OCI-LY7 (cell line): ENCODE measurements at regions of chr1 and their contacts with region 1.

Region 1: GRCh38 chr1:28642847-28643635 is at the start of gene TAF12:
- DNase-seq: peak; percentile 98
- H3K4me3 ChIP-seq: peak within 1 kb of the TSS; percentile 86
- H3K27ac ChIP-seq: peak within 1 kb of the TSS; percentile 95
- H3K4me1 ChIP-seq: peaks cover 39% of the 10 kb centered on the region
- CTCF ChIP-seq: peak; percentile 72
- total RNA-seq, gene TAF12: 30.1 and 31.0 TPM in 2 replicates

Region 2: DNA sequence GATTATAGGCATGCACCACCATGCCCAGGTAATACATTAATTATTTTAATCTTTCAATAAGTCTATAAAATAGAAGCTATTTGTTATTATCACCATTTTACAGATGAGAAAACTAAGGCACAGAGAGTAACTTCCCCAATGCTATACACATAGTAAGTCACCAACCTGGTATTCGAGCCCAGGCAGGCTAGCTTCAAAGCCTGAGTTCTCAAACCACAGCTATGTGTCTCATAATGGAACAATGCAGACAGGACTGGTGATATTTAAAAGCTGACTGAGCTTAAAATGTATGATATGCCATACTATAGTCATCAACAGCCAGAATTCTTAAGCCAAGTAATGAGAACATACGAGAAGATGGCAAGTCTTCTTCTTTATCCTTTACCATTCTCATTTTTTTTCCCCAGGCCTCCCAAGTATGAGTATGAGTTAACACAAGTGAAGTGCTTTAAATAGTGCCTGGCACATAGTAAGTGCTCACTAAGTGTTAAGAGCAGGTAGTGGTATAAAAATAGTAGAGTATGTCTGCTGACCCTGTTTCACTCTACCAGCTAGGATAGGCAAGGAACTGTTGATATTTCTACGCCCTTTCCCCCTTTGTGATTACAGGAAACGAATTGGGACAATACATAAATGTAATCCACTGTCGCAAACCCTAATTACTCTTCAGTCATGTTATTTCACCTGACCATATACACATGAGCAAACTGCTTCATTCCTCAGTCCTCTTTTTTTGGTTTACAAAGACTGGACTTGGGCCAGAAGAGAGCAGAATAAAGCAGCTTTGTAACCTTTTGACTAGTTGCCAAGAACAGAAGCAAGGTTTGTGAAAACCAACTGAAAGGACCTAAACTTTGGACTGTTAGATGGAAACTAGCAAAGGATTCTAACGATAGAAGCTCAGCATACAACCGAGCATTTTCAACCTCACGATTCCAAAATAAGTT is 564.1 kb before region 1 on chr1:
- CTCF ChIA-PET with region 1: no interaction called
- POLR2A ChIA-PET with region 1: no interaction called
- intact Hi-C with region 1: loop called (anchors 10 kb)
- DNase-seq: no peak
- H3K4me3 ChIP-seq: no peak overlapping the region
- H3K27ac ChIP-seq: peak overlapping the region; percentile 84
- H3K4me1 ChIP-seq: peaks cover 92% of the 10 kb centered on the region
- CTCF ChIP-seq: no peak

Region 3: DNA sequence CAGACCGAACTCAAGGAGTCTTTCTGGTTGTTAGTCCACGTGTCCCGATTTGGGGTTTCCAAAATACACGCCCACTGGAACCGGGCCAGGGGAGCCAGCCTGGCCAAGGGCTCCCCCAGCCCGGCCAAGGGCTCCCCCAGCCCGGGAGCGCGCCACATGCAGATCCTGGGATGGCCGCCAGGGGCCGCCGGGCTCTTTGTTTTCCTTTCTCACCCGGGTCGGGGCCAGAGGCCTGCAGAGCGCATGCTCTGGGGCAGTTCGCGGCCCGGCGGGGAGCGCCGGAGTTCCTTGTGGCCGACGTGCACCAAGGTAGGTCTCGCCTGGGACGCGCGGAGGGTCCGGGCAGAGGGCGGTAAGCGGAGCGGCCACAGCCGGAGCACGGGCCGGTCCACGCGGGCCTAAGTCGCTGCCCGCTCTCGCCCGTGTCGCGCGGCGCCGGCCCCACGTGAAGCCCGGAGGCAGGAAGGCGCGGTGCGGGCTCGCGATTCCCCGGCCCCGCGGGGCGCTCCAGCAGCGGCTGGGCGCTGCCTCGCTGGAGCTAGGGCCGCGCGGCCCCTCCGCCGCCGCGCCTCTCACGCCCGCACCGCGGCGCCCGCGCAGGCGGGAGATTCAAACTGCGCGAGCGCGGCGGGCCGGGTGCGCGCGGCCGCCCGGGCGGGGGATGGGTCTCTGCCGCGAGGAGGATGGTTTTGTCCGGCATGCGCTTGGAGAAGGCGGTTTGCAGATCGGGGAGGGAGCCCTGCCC is 124.9 kb before region 1 on chr1:
- CTCF ChIA-PET with region 1: no interaction called
- POLR2A ChIA-PET with region 1: interaction called, 5 read pairs
- intact Hi-C with region 1: loop called (anchors 1 kb)
- DNase-seq: peak; percentile 94
- H3K4me3 ChIP-seq: peak overlapping the region; percentile 78
- H3K27ac ChIP-seq: peak overlapping the region; percentile 75
- H3K4me1 ChIP-seq: peaks cover 51% of the 10 kb centered on the region
- CTCF ChIP-seq: peak; percentile 93

Region 4: DNA sequence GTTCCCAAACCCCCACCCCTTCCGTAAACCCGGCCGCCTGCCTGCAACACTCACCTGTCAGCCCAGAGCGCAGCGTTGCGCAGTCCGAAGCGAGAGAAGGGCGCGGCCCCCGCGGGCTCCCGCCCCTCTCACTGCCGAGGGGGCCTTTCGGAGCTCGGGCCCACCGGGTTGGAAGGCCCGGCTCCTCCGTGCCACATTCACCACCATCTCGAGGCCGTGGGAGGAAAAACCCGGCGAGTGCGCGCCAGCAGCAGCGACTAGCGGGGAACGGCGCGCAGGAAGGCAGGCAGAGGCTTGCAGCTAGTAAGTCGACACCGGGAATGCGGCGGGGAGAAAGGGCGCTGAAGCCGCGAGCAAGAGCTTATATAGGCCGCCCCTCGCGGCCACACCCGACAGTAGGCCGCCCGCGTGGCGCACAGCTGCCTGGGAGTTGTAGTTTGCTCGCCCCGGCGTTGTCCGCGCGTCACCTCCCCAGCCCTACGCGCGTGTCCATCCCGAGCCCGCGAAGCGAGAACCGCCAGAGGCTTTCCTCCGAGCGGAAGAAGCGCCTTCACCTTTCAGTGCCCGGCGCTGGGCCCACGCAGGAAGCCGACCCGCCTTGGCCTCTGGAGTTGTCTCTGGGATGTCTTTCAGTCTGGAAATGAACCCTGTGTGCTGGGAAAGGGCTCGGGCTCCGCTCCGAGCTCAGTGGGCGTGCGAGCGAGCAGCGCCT is 61.3 kb before region 1 on chr1:
- CTCF ChIA-PET with region 1: no interaction called
- POLR2A ChIA-PET with region 1: interaction called, 15 read pairs
- intact Hi-C with region 1: loop called (anchors 2 kb)
- DNase-seq: peak; percentile 96
- H3K4me3 ChIP-seq: peak overlapping the region; percentile 97
- H3K27ac ChIP-seq: peak overlapping the region; percentile 85
- H3K4me1 ChIP-seq: peaks cover 38% of the 10 kb centered on the region
- CTCF ChIP-seq: 0 out of 2 replicates have a peak, but pooled peaks have one; percentile 41

Region 5: DNA sequence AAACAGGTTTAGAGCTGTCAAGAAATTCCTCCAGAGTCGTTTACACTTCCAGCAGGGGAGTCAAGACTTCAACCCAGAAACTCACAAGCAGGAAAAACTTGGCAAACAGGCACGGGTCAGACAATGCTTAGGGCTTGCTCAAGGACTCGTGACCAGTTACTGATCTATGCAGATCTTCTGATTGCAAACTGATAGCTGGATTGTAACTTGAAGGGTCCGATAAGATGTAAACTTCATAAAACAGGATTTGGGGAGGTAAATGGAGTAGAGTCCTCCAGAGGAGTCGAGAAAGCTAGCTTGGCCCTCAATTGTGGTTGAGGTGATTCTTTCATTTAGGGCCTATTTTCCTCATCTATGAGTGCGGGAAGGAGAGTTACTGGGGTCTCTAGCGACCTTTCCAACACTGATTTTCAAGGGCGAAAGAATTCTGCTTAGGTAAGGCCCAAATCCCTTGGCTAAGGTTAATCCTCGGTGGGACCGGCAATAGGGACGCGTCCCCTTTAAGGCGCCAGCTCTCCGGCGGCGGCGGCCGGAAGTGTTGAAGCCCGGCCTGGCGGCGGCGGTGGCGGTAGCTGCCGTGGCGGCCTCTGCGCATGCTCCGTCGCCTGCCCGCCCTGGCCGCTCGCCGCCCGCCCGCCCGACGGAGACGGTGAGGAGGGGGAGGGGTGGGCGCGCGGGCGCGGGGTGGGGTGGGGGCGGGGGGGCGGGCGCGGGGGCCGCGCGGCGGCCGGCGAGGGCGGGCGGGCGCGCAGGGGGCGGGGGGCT is 25.3 kb after region 1 on chr1 and contains the start of gene GMEB1:
- CTCF ChIA-PET with region 1: interaction called, 3 read pairs
- POLR2A ChIA-PET with region 1: interaction called, 30 read pairs
- intact Hi-C with region 1: loop called (anchors 1 kb)
- DNase-seq: peak; percentile 93
- H3K4me3 ChIP-seq: peak within 1 kb of the TSS; percentile 87
- H3K27ac ChIP-seq: peak within 1 kb of the TSS; percentile 93
- H3K4me1 ChIP-seq: peaks cover 13% of the 10 kb centered on the region
- CTCF ChIP-seq: no peak
- total RNA-seq, gene GMEB1: 12.5 and 13.0 TPM in 2 replicates

Region 6: DNA sequence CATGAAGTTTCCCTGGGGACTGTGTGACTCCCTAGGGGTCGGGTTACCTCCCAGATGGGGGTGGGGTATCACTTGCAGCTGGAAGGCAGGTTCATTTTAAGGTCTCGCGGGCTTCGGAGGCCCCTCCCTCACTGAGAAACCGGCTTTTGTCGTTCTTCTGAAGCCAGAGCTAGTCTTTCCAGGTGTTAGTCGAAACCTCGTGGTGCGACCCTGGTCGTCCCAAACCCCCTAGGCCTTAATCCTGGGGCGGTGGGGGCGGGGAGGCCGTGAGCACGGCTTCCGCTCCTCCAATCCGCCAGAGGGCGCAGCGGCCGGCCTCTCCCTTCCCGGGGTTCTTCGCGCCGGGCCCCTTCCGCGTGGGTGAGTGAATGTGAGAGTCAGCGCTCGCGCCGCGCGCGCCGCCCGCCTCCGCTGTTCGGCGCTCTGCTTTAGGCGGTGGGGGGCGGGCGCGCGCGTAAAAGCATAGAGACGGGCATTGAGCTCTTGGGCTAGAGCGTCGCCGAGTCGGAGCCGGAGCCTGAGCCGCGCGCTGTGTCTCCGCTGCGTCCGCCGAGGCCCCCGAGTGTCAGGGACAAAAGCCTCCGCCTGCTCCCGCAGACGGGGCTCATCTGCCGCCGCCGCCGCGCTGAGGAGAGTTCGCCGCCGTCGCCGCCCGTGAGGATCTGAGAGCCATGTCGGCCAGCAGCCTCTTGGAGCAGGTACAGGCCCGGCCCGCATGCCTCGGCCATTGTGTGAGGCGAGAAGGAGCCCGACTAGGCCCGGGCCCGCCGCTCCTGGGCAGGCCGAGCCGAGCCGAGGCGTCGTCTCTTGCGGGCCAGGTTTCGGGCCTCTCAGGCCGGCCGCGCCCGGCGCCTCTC is 93.6 kb after region 1 on chr1 and contains the start of gene YTHDF2:
- CTCF ChIA-PET with region 1: interaction called, 10 read pairs
- POLR2A ChIA-PET with region 1: interaction called, 9 read pairs
- intact Hi-C with region 1: loop called (anchors 1 kb)
- DNase-seq: peak; percentile 99
- H3K4me3 ChIP-seq: peak within 1 kb of the TSS; percentile 88
- H3K27ac ChIP-seq: peak within 1 kb of the TSS; percentile 78
- H3K4me1 ChIP-seq: peaks cover 31% of the 10 kb centered on the region
- CTCF ChIP-seq: peak; percentile 91
- total RNA-seq, gene YTHDF2: 46.6 and 57.9 TPM in 2 replicates

Region 7: DNA sequence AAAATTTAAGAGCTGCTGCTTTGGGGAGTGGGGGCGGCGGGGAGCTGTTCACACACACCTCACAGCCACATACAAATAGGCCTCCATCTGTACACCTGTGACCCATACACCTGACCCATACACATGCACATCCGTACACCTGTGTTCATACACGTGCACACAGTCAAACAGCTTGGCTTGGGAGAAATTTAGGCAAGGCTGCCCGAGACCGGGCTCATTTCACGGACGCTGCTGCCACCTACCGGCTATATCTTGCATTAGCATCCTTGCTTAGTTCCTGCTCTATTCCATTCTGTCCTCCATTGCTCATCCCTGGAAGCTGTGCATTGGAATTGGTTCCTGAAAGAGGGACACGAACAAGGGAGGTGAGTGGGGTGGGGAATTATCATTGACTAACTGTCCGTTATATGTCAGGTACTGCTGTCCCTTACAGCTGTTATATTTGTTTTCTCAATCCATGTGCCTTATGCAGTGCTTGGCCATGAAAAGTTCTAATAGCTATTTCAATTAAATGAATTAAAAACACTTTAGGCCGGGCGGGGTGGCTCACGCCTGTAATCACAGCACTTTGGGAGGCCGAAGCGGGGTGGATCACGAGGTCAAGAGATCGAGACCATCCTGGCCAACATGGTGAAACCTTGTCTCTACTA is 234.2 kb after region 1 on chr1:
- CTCF ChIA-PET with region 1: interaction called, 5 read pairs
- POLR2A ChIA-PET with region 1: interaction called, 5 read pairs
- intact Hi-C with region 1: loop called (anchors 1 kb)
- DNase-seq: peak; percentile 84
- H3K4me3 ChIP-seq: no peak overlapping the region
- H3K27ac ChIP-seq: no peak overlapping the region
- H3K4me1 ChIP-seq: peaks cover 6% of the 10 kb centered on the region
- CTCF ChIP-seq: peak; percentile 98